ENCODE measurements at regions of chr11 and their contacts with region 1.

Region 1: GRCh38 chr11:68271781-68272608 is at the start of gene C11orf24:
- DNase-seq: peak; percentile 81 to 97 (median 93)
- ATAC-seq: peak; percentile 86
- H3K4me3 ChIP-seq: peak within 1 kb of the TSS; percentile 71 to 95
- H3K4me3 Mint-ChIP-seq: peak within 1 kb of the TSS; percentile 91
- H3K27ac ChIP-seq: peak within 1 kb of the TSS; percentile 93 to 97
- H3K27ac Mint-ChIP-seq: peak within 1 kb of the TSS; percentile 95
- H3K4me1 ChIP-seq: peaks cover 26% of the 10 kb centered on the region
- H3K4me1 Mint-ChIP-seq: peaks cover 32% of the 10 kb centered on the region
- H3K27me3 ChIP-seq: no peaks in the 10 kb centered on the region
- H3K27me3 Mint-ChIP-seq: no peaks in the 10 kb centered on the region
- CTCF ChIP-seq: no peak
- total RNA-seq, gene C11orf24: 6.5 to 8.2 TPM

Region 2: DNA sequence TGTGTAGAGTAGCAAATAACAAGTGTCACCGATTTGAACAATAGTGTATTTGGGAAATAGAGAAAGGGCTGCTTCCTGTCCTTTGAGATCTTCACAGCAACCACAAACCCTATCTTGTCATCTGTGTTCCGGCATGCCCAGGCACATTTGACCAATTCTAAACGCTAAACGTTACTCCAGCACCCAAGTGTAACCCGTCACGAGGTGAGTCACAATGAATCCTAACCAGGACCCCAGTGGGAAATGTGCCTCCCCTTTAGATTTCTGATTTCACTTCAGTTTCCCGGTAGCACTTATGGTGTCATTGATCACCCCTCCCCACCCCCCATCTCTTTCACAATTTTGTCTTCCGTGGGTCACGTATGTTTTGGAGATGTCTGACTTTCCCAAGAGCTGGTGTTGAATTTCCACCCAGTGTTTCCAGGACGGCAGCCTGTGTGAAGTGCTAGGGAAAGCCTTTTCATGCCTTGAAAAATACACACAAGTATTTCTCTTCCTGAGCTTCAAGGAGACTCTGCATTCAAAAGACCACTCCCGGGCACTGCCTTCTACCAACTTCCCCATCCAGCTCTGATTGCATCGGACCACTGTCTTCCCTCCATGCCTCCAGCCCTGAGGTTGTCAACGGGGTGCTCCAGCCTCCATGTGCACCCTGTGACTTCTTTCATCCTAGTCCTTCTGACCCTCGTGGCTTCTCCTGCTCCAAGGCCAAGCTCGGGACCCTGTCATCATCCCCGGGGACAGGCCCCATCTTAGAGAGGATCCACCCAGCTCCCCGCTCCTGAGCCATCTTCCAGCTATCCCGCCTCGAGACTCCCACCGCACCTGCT is 10.4 kb after region 1 on chr11:
- CTCF ChIA-PET with region 1: interaction called, 6 read pairs
- POLR2A ChIA-PET with region 1: interaction called, 5 read pairs
- intact Hi-C with region 1: loop called in 1 of 2 experiments (anchors 1 kb)
- DNase-seq: peak in 6 of 9 experiments; percentile 20 to 54 (median 36)
- ATAC-seq: peak; percentile 68
- H3K4me3 ChIP-seq: peak overlapping the region; percentile 7 to 21
- H3K4me3 Mint-ChIP-seq: peak overlapping the region; percentile 70
- H3K27ac ChIP-seq: peak overlapping the region in 1 of 2 experiments; percentile 15
- H3K27ac Mint-ChIP-seq: no peak overlapping the region
- H3K4me1 ChIP-seq: peaks cover 16% of the 10 kb centered on the region
- H3K4me1 Mint-ChIP-seq: peaks cover 17% of the 10 kb centered on the region
- H3K27me3 ChIP-seq: no peaks in the 10 kb centered on the region
- H3K27me3 Mint-ChIP-seq: peaks cover 3% of the 10 kb centered on the region
- CTCF ChIP-seq: no peak